ENCODE measurements at regions of chr5 and their contacts with region 1.

Region 1: GRCh38 chr5:157142317-157143126 is at the start of gene MED7:
- DNase-seq: peak; percentile 98
- ATAC-seq: peak; percentile 99
- H3K4me3 Mint-ChIP-seq: peak within 1 kb of the TSS; percentile 90
- H3K27ac Mint-ChIP-seq: peak within 1 kb of the TSS; percentile 98
- H3K4me1 Mint-ChIP-seq: peaks cover 36% of the 10 kb centered on the region
- H3K27me3 Mint-ChIP-seq: no peaks in the 10 kb centered on the region
- total RNA-seq, gene MED7: 13.1 to 13.9 TPM

Region 2: GRCh38 chr5:156929366-156929948 is 213.1 kb before region 1 on chr5:
- CTCF ChIA-PET with region 1: interaction called, 3 read pairs
- POLR2A ChIA-PET with region 1: interaction called, 19 read pairs
- DNase-seq: no peak
- ATAC-seq: peak; percentile 63
- H3K4me3 Mint-ChIP-seq: no peak overlapping the region
- H3K27ac Mint-ChIP-seq: peak overlapping the region; percentile 89
- H3K4me1 Mint-ChIP-seq: peaks cover 86% of the 10 kb centered on the region
- H3K27me3 Mint-ChIP-seq: no peaks in the 10 kb centered on the region

Region 3: GRCh38 chr5:157108976-157109375 is 33.5 kb before region 1 on chr5 and contains the start of gene HAVCR2:
- CTCF ChIA-PET with region 1: interaction called, 4 read pairs
- POLR2A ChIA-PET with region 1: interaction called, 58 read pairs
- DNase-seq: peak; percentile 85
- ATAC-seq: peak; percentile 88
- H3K4me3 Mint-ChIP-seq: peak within 1 kb of the TSS; percentile 93
- H3K27ac Mint-ChIP-seq: peak within 1 kb of the TSS; percentile 92
- H3K4me1 Mint-ChIP-seq: peaks cover 72% of the 10 kb centered on the region
- H3K27me3 Mint-ChIP-seq: no peaks in the 10 kb centered on the region
- total RNA-seq, gene HAVCR2: 77.6 to 78.7 TPM

Region 4: DNA sequence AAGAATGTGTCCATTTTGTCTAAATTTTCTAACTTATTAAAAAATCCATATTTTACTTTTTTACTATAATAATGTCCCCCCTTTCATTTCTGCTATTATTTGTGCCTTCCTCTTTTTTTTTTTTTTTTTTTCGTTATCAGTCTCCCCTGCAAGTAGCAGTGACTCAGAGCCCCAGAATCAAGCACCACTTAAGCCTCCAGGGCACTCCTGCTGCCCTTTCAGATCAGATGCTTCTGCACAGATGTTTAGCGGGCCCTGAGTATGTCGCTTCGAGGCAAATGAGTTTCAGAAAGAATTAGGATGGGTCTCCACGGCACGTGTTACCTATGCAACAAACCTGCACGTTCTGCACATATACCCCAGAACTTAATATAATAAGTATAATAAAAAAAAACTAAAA is 11.6 kb before region 1 on chr5:
- CTCF ChIA-PET with region 1: interaction called, 19 read pairs
- POLR2A ChIA-PET with region 1: interaction called, 22 read pairs
- DNase-seq: no peak
- ATAC-seq: no peak
- H3K4me3 Mint-ChIP-seq: no peak overlapping the region
- H3K27ac Mint-ChIP-seq: no peak overlapping the region
- H3K4me1 Mint-ChIP-seq: peaks cover 39% of the 10 kb centered on the region
- H3K27me3 Mint-ChIP-seq: no peaks in the 10 kb centered on the region

Region 5: GRCh38 chr5:157172403-157172802 is 29.9 kb after region 1 on chr5:
- CTCF ChIA-PET with region 1: interaction called, 5 read pairs
- POLR2A ChIA-PET with region 1: interaction called, 24 read pairs
- DNase-seq: peak; percentile 88
- ATAC-seq: peak; percentile 97
- H3K4me3 Mint-ChIP-seq: peak overlapping the region; percentile 60
- H3K27ac Mint-ChIP-seq: peak overlapping the region; percentile 90
- H3K4me1 Mint-ChIP-seq: peaks cover 81% of the 10 kb centered on the region
- H3K27me3 Mint-ChIP-seq: no peaks in the 10 kb centered on the region

Region 6: GRCh38 chr5:157219491-157220271 is 77.2 kb after region 1 on chr5:
- CTCF ChIA-PET with region 1: interaction called, 4 read pairs
- POLR2A ChIA-PET with region 1: interaction called, 18 read pairs
- DNase-seq: peak; percentile 21
- ATAC-seq: no peak
- H3K4me3 Mint-ChIP-seq: peak overlapping the region; percentile 39
- H3K27ac Mint-ChIP-seq: peak overlapping the region; percentile 90
- H3K4me1 Mint-ChIP-seq: peaks cover 94% of the 10 kb centered on the region
- H3K27me3 Mint-ChIP-seq: no peaks in the 10 kb centered on the region

Measured in activated CD8-positive, alpha-beta T cell treated with anti-CD3 and anti-CD28 coated beads, Interleukin-2, amount 10 ng/mL, durations not matched to agents 7 days and 5 days (primary cell).